ENCODE measurements at regions of chr16 and their contacts with region 1.

Region 1: DNA sequence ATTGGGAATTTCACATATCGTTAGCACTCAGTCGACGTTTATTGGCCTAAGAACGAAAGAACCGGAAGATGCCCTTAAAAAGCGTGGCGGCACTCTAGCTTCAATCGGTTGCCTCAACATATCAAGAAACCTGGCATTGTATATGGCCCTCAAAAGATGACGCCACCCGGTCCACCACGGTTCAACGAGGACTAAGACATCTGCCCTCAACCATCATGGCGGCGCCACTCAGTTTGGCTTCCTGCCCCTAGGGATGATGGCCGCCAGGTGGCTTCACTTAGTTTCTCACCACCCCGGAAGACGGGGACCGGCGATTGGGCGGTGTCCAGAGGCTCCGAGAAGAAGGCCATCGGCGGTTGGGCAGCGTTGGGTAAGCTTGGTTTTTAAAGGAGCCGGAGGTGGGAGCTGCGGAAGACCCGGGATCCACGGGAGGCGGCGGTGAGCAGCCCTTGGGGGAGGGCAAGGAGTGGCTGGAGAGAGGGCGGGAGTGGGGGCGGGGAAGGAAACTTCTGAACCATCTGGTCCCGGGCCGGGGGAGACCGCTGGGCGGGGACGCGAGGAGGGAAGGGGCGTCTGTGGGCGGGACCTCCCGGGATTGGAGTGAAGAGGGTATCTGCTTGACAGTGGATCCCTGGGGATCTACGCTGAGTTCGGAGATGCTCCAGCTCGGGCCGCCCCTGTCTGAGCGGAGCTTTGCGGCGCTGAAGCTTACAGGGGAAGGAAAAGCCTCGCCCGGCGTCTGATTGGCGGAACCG is at the start of gene PRR14:
- DNase-seq: peak; percentile 90
- ATAC-seq: peak; percentile 72
- H3K4me3 Mint-ChIP-seq: peak within 1 kb of the TSS; percentile 96
- H3K27ac Mint-ChIP-seq: peak within 1 kb of the TSS; percentile 95
- H3K4me1 Mint-ChIP-seq: peaks cover 24% of the 10 kb centered on the region
- H3K27me3 Mint-ChIP-seq: no peaks in the 10 kb centered on the region
- CTCF ChIP-seq: no peak
- total RNA-seq, gene PRR14: 63.5 and 77.9 TPM in 2 replicates

Region 2: GRCh38 chr16:30534368-30535105 is 116.0 kb before region 1 on chr16 and contains the start of gene ZNF747:
- CTCF ChIA-PET with region 1: no interaction called
- POLR2A ChIA-PET with region 1: interaction called, 15 read pairs
- intact Hi-C with region 1: no loop called
- DNase-seq: peak; percentile 85
- ATAC-seq: peak; percentile 83
- H3K4me3 Mint-ChIP-seq: peak within 1 kb of the TSS; percentile 96
- H3K27ac Mint-ChIP-seq: peak within 1 kb of the TSS; percentile 97
- H3K4me1 Mint-ChIP-seq: peaks cover 23% of the 10 kb centered on the region
- H3K27me3 Mint-ChIP-seq: no peaks in the 10 kb centered on the region
- CTCF ChIP-seq: no peak
- total RNA-seq, gene ZNF747: 16.3 and 21.6 TPM in 2 replicates

Region 3: DNA sequence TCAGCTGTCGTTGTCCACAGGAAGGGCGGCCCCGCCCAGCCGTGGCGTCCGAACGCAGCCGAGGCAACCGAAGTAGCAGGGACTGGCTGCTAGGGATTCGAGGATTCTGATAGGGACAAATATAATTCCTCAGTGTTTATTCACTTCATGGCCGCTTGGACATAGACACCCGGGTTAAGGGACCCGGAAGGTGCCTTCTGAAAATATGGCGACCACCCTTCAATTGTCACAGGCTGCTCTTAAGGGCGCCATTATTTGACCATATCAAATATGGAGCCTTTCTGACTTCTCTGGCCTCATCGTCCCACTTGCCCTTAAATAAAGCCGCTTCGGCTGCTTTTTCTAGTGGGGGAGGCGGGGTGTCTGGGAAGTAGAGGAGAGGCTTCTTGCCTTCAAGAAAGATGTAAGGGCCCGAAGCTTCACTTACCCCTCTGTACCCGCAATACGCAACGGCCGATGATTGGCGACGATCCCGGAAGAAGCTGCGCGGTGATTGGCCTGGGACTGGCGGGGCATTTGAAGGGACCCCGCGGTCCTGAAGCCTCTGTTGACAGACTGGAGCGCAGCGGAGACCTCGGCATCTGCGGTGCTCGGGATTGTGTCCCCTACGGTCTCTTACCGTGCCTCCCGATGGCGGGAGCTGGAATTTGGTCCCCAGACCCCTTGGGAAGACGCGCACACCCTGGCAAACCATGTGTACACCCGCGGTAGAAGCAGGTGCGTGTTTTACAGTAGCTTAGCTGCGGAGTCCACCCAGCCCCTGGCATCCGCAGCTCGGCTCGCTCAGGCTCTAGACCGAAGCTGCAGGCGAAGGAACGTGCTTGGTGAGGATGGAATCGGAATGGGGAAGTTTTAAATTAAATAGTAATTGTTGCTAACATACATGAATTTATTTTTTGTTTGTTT is 78.6 kb before region 1 on chr16 and contains the start of gene ZNF688:
- CTCF ChIA-PET with region 1: no interaction called
- POLR2A ChIA-PET with region 1: interaction called, 18 read pairs
- intact Hi-C with region 1: loop called (anchors 1 kb)
- DNase-seq: peak; percentile 78
- ATAC-seq: peak; percentile 86
- H3K4me3 Mint-ChIP-seq: peak within 1 kb of the TSS; percentile 89
- H3K27ac Mint-ChIP-seq: peak within 1 kb of the TSS; percentile 96
- H3K4me1 Mint-ChIP-seq: peaks cover 41% of the 10 kb centered on the region
- H3K27me3 Mint-ChIP-seq: no peaks in the 10 kb centered on the region
- CTCF ChIP-seq: no peak
- total RNA-seq, gene ZNF688: 13.9 and 14.7 TPM in 2 replicates

Region 4: GRCh38 chr16:30628627-30629540 is 21.7 kb before region 1 on chr16:
- CTCF ChIA-PET with region 1: interaction called, 6 read pairs
- POLR2A ChIA-PET with region 1: interaction called, 45 read pairs
- intact Hi-C with region 1: loop called (anchors 1 kb)
- DNase-seq: peak; percentile 84
- ATAC-seq: peak; percentile 93
- H3K4me3 Mint-ChIP-seq: peak overlapping the region; percentile 69
- H3K27ac Mint-ChIP-seq: peak overlapping the region; percentile 76
- H3K4me1 Mint-ChIP-seq: peaks cover 6% of the 10 kb centered on the region
- H3K27me3 Mint-ChIP-seq: no peaks in the 10 kb centered on the region
- CTCF ChIP-seq: peak; percentile 70

Region 5: DNA sequence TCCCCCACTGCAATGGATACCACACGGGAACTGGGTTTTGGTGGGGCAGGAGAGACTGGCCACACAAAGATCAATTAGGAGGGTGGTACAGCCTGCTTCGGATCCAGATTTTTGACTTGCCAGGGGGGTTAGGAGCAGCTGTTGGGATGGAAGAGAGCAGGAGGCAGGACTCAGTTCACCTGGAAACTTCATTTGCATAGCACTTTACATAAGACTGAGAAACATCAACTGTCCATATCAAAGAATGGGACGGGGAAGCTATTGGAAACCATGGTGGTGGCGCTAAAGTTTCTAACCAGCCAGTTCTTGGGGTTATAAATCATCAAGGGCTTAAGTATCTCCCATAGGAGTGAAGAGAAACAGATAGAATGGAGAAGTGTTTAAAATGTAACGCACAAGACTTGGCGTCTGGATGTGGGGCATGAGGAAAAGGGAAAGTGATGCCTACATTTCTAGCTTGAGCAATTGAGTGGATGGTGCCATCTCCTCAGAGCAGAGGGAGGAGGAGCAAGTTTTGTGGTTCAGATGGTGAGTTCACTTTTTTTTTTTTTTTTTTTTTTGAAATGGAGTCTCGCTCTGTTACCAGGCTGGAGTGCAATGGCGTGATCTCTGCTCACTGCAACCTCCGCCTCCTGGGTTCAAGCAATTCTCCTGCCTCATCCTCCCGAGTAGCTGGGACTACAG is 42.0 kb after region 1 on chr16:
- CTCF ChIA-PET with region 1: interaction called, 13 read pairs
- POLR2A ChIA-PET with region 1: interaction called, 19 read pairs
- intact Hi-C with region 1: loop called (anchors 1 kb)
- DNase-seq: no peak
- ATAC-seq: no peak
- H3K4me3 Mint-ChIP-seq: no peak overlapping the region
- H3K27ac Mint-ChIP-seq: no peak overlapping the region
- H3K4me1 Mint-ChIP-seq: peaks cover 11% of the 10 kb centered on the region
- H3K27me3 Mint-ChIP-seq: no peaks in the 10 kb centered on the region
- CTCF ChIP-seq: no peak

Region 6: DNA sequence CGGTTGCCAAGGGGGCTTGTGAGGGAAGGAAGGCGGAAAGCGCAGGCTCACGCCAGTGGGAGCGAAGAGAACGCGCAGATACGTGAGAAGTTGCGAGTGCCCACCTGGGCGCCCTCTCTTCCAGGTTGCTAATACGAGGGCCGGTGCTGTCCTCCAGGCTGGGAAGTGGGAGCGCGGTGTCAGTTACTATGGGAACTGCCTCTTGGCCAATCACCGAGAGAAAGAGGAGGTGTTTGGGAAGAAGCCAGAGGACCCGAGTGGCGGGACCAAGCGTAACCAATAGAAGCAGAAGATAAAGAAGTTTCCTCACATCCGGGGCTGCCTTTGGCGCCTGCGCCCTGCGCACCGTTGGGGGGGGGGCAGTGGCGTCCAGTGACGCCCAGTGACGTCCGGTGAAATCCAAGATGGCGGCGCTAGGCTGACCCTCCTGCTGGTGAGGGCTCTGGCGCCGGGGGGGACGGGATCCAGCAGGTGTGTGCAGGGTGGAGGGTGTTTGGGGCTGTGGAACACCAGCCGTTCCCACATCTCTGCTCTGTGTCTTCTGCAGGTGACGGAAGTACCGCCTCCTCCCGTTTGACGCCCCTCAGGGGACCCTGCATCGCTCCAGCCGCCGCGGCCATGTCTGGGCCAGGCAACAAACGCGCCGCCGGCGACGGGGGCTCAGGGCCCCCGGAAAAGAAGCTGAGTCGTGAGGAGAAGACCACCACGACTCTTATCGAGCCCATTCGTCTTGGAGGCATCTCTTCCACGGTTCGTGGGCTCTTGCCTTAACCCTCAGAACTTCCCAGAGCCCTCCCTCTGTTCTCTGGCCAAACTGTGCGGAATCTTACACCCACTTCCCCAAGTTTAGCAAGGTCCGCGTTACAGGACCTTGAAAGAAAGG is 111.6 kb after region 1 on chr16 and contains the starts of genes CFAP119 and RNF40:
- CTCF ChIA-PET with region 1: no interaction called
- POLR2A ChIA-PET with region 1: no interaction called
- intact Hi-C with region 1: loop called (anchors 1 kb)
- DNase-seq: peak; percentile 94
- ATAC-seq: peak; percentile 89
- H3K4me3 Mint-ChIP-seq: peak within 1 kb of the TSS; percentile 93
- H3K27ac Mint-ChIP-seq: peak within 1 kb of the TSS; percentile 87
- H3K4me1 Mint-ChIP-seq: peaks cover 42% of the 10 kb centered on the region
- H3K27me3 Mint-ChIP-seq: no peaks in the 10 kb centered on the region
- CTCF ChIP-seq: no peak
- total RNA-seq, gene CFAP119: 6.2 and 8.8 TPM in 2 replicates
- total RNA-seq, gene RNF40: 99.6 and 117 TPM in 2 replicates

Region 7: GRCh38 chr16:31073968-31074813 is 423.6 kb after region 1 on chr16 and contains the starts of genes ZNF646 and ZNF668:
- CTCF ChIA-PET with region 1: no interaction called
- POLR2A ChIA-PET with region 1: interaction called, 3 read pairs
- intact Hi-C with region 1: loop called (anchors 2 kb)
- DNase-seq: peak; percentile 86
- ATAC-seq: peak; percentile 83
- H3K4me3 Mint-ChIP-seq: peak within 1 kb of the TSS; percentile 96
- H3K27ac Mint-ChIP-seq: peak within 1 kb of the TSS; percentile 91
- H3K4me1 Mint-ChIP-seq: peaks cover 34% of the 10 kb centered on the region
- H3K27me3 Mint-ChIP-seq: no peaks in the 10 kb centered on the region
- CTCF ChIP-seq: no peak
- total RNA-seq, gene ZNF646: 32.4 and 32.5 TPM in 2 replicates
- total RNA-seq, gene ZNF668: 8.3 and 10.1 TPM in 2 replicates